Transverse colon (tissue), 4 donors: ENCODE measurements at regions of chr7 and their contacts with region 1.

Region 1: GRCh38 chr7:114663502-114663901 is 248.9 kb downstream of the FOXP2 start:
- DNase-seq: peak; percentile 8
- H3K4me3 ChIP-seq: no peak overlapping the region
- H3K27ac ChIP-seq: no peak overlapping the region
- H3K4me1 ChIP-seq: no peaks in the 10 kb centered on the region
- H3K27me3 ChIP-seq: no peaks in the 10 kb centered on the region
- CTCF ChIP-seq: peak in 4 of 5 experiments; percentile 19 to 44 (median 28)
- EP300 ChIP-seq: no peak
- POLR2A ChIP-seq: no peak

Region 2: GRCh38 chr7:114243019-114243507 is 420.4 kb before region 1 on chr7:
- in situ Hi-C with region 1: loop called in 1 of 4 experiments (anchors 25 kb)
- intact Hi-C with region 1: no loop called
- DNase-seq: no peak
- H3K4me3 ChIP-seq: no peak overlapping the region
- H3K27ac ChIP-seq: no peak overlapping the region
- H3K4me1 ChIP-seq: peaks cover 0 to 10% (median 0%) of the 10 kb centered on the region in 4 donors
- H3K27me3 ChIP-seq: no peaks in the 10 kb centered on the region
- CTCF ChIP-seq: no peak
- EP300 ChIP-seq: no peak
- POLR2A ChIP-seq: no peak

Region 3: DNA sequence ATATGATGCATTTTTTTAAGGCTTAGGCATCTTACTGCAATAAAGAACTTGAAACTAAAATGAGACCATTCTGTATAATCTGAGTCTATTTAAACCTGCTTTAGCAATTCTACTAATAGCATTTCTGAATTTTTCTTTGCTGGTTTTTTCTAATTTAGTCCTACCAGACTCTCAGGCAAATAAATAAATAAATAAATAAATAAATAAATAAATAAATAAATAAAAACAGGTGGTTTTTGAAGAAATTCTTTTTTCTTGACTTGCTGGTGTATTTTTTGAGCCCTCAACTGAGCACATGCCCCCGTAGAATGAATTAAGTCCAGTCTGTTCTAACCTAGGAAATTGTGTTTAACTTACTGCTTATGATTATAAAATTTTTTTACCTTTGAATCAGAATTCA is 383.6 kb before region 1 on chr7:
- in situ Hi-C with region 1: no loop called
- intact Hi-C with region 1: no loop called
- DNase-seq: no peak
- H3K4me3 ChIP-seq: no peak overlapping the region
- H3K27ac ChIP-seq: no peak overlapping the region
- H3K4me1 ChIP-seq: no peaks in the 10 kb centered on the region
- H3K27me3 ChIP-seq: no peaks in the 10 kb centered on the region
- CTCF ChIP-seq: no peak
- EP300 ChIP-seq: no peak
- POLR2A ChIP-seq: no peak

Region 4: GRCh38 chr7:114678116-114678515 is 14.6 kb after region 1 on chr7:
- in situ Hi-C with region 1: no loop called
- intact Hi-C with region 1: no loop called
- DNase-seq: no peak
- H3K4me3 ChIP-seq: no peak overlapping the region
- H3K27ac ChIP-seq: no peak overlapping the region
- H3K4me1 ChIP-seq: no peaks in the 10 kb centered on the region
- H3K27me3 ChIP-seq: no peaks in the 10 kb centered on the region
- CTCF ChIP-seq: no peak
- EP300 ChIP-seq: no peak
- POLR2A ChIP-seq: no peak